ENCODE measurements at regions of chr2 and their contacts with region 1.

Region 1: DNA sequence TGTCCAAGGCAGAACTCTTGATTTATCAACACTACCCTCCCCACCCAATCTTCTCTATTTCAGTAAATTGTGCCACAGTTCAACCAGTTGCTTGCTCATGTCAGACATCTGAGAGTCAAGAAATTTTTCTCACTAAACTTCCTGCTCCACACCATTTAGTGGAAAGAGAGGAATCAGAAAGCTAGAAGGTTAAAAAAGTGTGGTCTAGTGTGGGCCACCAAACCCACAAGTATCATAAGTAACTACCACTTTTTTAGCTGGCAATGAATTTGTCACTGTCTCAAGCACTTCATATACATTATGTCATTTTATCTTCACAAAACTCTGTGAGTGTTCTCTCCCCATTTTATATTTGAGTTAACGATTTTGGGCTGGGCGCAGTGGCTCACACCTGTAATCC is 16.6 kb upstream of the MSTN start:
- DNase-seq: no peak
- ATAC-seq: no peak
- H3K4me3 ChIP-seq: no peak overlapping the region
- H3K27ac ChIP-seq: no peak overlapping the region
- H3K4me1 ChIP-seq: no peaks in the 10 kb centered on the region
- H3K27me3 ChIP-seq: no peaks in the 10 kb centered on the region
- CTCF ChIP-seq: no peak

Region 2: GRCh38 chr2:189661148-189661956 is 417.8 kb before region 1 on chr2 and contains the start of gene ASNSD1:
- intact Hi-C with region 1: loop called in 1 of 3 experiments (anchors 5 kb)
- DNase-seq: peak; percentile 98 to 100 (median 99)
- ATAC-seq: peak; percentile 94 to 99 (median 98)
- H3K4me3 ChIP-seq: peak within 1 kb of the TSS; percentile 46 to 97 (median 89)
- H3K27ac ChIP-seq: peak within 1 kb of the TSS; percentile 35 to 85 (median 54)
- H3K4me1 ChIP-seq: peaks cover 7 to 13% (median 11%) of the 10 kb centered on the region in 3 donors
- H3K27me3 ChIP-seq: no peaks in the 10 kb centered on the region
- CTCF ChIP-seq: peak; percentile 91 to 95 (median 93)
- total RNA-seq, gene ASNSD1: 12.6 to 16.2 (median 15.5) TPM

Region 3: DNA sequence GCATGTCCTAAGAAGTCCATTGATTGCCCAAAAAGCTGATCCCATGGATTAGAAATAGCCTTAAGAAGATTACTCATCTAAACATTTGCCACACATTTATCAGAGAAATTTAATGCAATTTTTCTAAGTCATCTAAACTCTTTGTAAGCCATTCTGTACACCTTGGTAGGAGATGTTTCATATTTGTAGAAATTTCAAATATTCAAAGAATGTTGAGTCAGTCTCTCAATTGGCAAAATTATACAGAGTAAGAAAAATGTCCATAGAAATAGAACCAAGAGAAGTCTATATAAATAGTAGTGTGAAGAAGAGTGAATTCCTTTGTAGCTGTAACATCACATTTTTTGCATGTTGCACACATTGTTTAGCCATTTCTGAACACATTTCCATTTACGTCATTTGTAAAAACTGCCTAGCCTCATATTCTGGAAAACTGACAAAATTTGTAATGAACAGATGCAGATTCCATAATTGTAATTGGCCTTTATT is 145.2 kb before region 1 on chr2:
- intact Hi-C with region 1: no loop called
- DNase-seq: no peak
- ATAC-seq: no peak
- H3K4me3 ChIP-seq: no peak overlapping the region
- H3K27ac ChIP-seq: no peak overlapping the region
- H3K4me1 ChIP-seq: no peaks in the 10 kb centered on the region
- H3K27me3 ChIP-seq: no peaks in the 10 kb centered on the region
- CTCF ChIP-seq: no peak